ENCODE measurements at regions of chr3 and their contacts with region 1.

Region 1: GRCh38 chr3:150408221-150409102 is at the start of gene TSC22D2:
- DNase-seq: peak; percentile 90 to 93
- ATAC-seq: peak; percentile 61 to 62
- H3K4me3 ChIP-seq: peak within 1 kb of the TSS; percentile 78 to 92 (median 85)
- H3K27ac ChIP-seq: peak within 1 kb of the TSS; percentile 99 to 100 (median 99)
- H3K4me1 ChIP-seq: peaks cover 15 to 27% of the 10 kb centered on the region in 2 donors
- H3K27me3 ChIP-seq: no peaks in the 10 kb centered on the region
- CTCF ChIP-seq: peak in 4 of 5 experiments; percentile 21 to 30 (median 22)
- POLR2A ChIP-seq: peak; percentile 98 to 99
- total RNA-seq, gene TSC22D2: 12.9 to 16.1 (median 14.0) TPM

Region 2: GRCh38 chr3:149009732-149010131 is 1398.7 kb before region 1 on chr3:
- in situ Hi-C with region 1: no loop called
- intact Hi-C with region 1: loop called (anchors 10 kb)
- DNase-seq: no peak
- ATAC-seq: peak in 1 of 2 donors; percentile 10
- H3K4me3 ChIP-seq: no peak overlapping the region
- H3K27ac ChIP-seq: peak overlapping the region; percentile 98 to 100 (median 100)
- H3K4me1 ChIP-seq: peaks cover 87 to 88% of the 10 kb centered on the region in 2 donors
- H3K27me3 ChIP-seq: no peaks in the 10 kb centered on the region
- CTCF ChIP-seq: no peak
- POLR2A ChIP-seq: no peak

Region 3: GRCh38 chr3:149812606-149813366 is 595.7 kb before region 1 on chr3 and contains the start of gene RNF13:
- in situ Hi-C with region 1: no loop called
- intact Hi-C with region 1: loop called (anchors 5 kb)
- DNase-seq: peak; percentile 98 to 99
- ATAC-seq: peak; percentile 91 to 96
- H3K4me3 ChIP-seq: peak within 1 kb of the TSS; percentile 72 to 90 (median 82)
- H3K27ac ChIP-seq: peak within 1 kb of the TSS; percentile 91 to 98 (median 96)
- H3K4me1 ChIP-seq: peaks cover 41 to 48% of the 10 kb centered on the region in 2 donors
- H3K27me3 ChIP-seq: no peaks in the 10 kb centered on the region
- CTCF ChIP-seq: no peak
- POLR2A ChIP-seq: peak; percentile 75 to 89
- total RNA-seq, gene RNF13: 48.3 to 63.6 (median 56.9) TPM

Region 4: DNA sequence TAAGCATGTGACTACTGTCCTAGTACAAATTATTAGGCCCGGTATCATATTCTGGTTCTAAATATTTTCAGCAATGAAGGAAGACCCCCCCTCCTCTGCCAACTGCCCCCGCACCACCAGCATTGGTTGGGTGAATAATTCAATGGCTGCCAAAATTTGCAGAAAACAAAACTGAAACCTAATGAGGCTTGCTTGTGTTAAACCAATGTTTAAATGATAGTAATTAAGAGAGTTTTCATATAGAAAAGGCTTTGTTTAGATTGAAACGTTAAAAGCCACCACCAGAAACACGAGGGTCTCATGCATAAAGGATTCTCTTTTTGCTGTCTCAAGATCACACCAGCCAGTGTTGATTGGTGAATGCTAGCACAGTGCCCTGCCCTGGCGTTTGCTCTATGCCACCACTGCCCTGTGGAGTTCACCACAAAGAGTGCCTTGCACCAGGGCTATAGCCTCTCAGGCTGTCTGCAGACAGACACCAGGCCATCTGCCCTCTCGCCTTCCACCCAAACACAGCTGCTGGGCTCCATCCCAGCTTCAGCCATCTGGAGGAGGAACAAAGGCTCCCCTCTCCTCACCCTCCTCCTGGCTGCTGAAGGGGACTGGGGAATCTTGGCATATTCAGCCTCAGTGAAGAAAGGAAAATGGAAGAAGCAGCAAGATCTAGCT is 237.5 kb before region 1 on chr3:
- in situ Hi-C with region 1: no loop called
- intact Hi-C with region 1: no loop called
- DNase-seq: no peak
- ATAC-seq: no peak
- H3K4me3 ChIP-seq: no peak overlapping the region
- H3K27ac ChIP-seq: peak overlapping the region in 2 of 4 donors; percentile 79 to 89
- H3K4me1 ChIP-seq: peaks cover 27 to 34% of the 10 kb centered on the region in 2 donors
- H3K27me3 ChIP-seq: no peaks in the 10 kb centered on the region
- CTCF ChIP-seq: no peak
- POLR2A ChIP-seq: no peak

Region 5: GRCh38 chr3:150238998-150239619 is 169.4 kb before region 1 on chr3:
- in situ Hi-C with region 1: no loop called
- intact Hi-C with region 1: loop called (anchors 5 kb)
- DNase-seq: no peak
- ATAC-seq: no peak
- H3K4me3 ChIP-seq: no peak overlapping the region
- H3K27ac ChIP-seq: no peak overlapping the region
- H3K4me1 ChIP-seq: peaks cover 12 to 32% of the 10 kb centered on the region in 2 donors
- H3K27me3 ChIP-seq: no peaks in the 10 kb centered on the region
- CTCF ChIP-seq: no peak
- POLR2A ChIP-seq: no peak

Region 6: DNA sequence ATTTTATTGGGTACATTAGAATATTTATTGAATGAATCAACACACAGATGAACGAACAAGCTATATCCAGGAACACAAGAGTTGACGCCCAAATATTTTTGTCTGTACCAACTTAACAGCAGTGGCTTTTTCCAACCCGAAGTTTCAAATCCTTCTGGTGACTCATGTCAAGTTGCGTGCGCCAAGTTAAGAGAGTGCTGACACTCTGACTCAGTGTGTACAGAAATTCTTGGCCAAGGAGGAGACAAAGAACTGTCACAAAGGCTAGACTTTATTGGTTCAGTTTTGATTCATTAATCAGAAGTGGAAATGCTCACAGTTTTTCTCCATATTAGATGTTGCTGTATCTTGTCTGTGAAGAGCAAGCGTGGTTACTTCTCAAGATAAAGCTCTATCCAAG is 60.0 kb before region 1 on chr3:
- in situ Hi-C with region 1: no loop called
- intact Hi-C with region 1: loop called (anchors 5 kb)
- DNase-seq: no peak
- ATAC-seq: peak; percentile 99 to 100
- H3K4me3 ChIP-seq: no peak overlapping the region
- H3K27ac ChIP-seq: peak overlapping the region in 3 of 4 donors; percentile 20 to 70 (median 44)
- H3K4me1 ChIP-seq: peaks cover 15 to 22% of the 10 kb centered on the region in 2 donors
- H3K27me3 ChIP-seq: peaks cover 0 to 4% (median 0%) of the 10 kb centered on the region in 3 donors
- CTCF ChIP-seq: no peak
- POLR2A ChIP-seq: no peak

Region 7: DNA sequence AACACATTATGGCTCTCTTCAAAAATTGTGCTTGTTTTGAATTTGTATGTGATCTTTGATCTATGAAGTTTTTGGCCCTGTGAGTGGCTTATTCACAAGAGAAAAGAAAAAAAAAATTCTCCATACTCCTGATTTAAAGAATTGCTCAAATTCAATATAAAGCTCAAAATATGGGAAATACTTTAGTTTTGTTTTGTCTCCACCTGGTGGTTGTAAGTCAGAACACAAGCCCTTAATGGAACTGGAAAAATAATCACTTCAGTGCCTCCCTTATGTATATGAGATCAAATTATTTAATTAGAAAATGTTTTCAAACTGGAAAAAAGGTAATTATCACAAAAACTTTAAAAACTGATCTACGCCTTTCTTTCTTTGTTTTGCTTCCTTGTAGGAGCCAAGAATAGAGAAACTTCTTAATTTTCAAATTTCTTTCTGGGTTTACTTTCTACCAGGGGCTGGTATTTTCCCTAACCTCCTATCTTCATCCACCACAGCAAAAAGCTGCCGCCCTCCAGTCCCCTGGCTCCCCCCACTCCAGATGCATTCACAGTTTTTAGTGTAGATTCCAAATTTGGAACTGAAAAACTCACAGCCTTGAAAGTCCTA is 87.2 kb after region 1 on chr3:
- in situ Hi-C with region 1: loop called in 3 of 4 experiments (anchors 10 kb)
- intact Hi-C with region 1: loop called (anchors 1 kb)
- DNase-seq: no peak
- ATAC-seq: peak; percentile 58 to 62
- H3K4me3 ChIP-seq: no peak overlapping the region
- H3K27ac ChIP-seq: no peak overlapping the region
- H3K4me1 ChIP-seq: no peaks in the 10 kb centered on the region
- H3K27me3 ChIP-seq: no peaks in the 10 kb centered on the region
- CTCF ChIP-seq: peak; percentile 73 to 96 (median 80)
- POLR2A ChIP-seq: no peak

Region 8: GRCh38 chr3:150603153-150603979 is 194.9 kb after region 1 on chr3 and contains the start of gene SELENOT:
- in situ Hi-C with region 1: no loop called
- intact Hi-C with region 1: loop called (anchors 2 kb)
- DNase-seq: peak; percentile 88 to 95
- ATAC-seq: peak; percentile 94 to 96
- H3K4me3 ChIP-seq: peak within 1 kb of the TSS; percentile 75 to 95 (median 86)
- H3K27ac ChIP-seq: peak within 1 kb of the TSS; percentile 93 to 98 (median 96)
- H3K4me1 ChIP-seq: peaks cover 41 to 50% of the 10 kb centered on the region in 2 donors
- H3K27me3 ChIP-seq: no peaks in the 10 kb centered on the region
- CTCF ChIP-seq: peak; percentile 27 to 58 (median 49)
- POLR2A ChIP-seq: peak; percentile 93
- total RNA-seq, gene SELENOT: 69.6 to 83.1 (median 76.2) TPM